Aorta (tissue), 5 donors: ENCODE measurements at regions of chr14 and their contacts with region 1.

Region 1: DNA sequence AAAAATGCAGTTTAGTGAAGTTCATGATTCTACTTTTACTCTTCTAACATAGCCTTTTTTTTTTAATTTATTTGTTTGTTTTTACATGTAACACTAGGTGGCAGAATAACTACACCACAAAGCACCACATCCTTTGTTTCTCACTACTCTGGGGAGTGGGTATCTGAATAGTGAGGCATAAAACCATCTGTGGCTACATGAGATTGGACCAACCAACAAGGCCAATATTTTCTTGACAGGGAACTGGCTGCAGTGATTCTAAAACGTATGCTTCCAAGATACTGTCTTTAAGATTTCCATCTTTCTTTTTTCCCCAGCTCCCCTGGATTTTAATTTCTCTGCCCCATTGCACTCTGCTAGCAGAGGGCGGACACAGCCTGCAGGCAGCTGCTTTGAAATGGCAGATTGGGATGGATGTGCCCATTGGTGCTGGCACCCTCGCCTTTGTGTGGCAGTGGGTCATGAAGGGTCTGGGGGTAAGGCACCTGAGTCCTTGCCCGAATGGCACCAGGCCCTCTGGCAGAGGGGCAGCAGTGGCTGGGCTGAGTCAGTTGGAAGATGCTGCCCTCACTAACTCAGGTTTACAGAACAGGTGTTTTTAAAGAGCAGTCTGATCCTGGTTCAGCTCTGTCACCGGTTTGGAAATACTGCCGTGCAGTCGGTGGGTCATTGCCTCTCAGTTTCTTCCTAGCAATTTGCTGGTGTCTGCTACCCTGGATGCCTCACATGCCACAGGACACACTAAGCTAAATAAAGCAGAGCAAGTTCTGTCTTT is 429.1 kb downstream of the RAD51B start:
- DNase-seq: peak; percentile 57 to 73
- ATAC-seq: peak; percentile 82
- H3K4me3 ChIP-seq: no peak overlapping the region
- H3K27ac ChIP-seq: peak overlapping the region in 1 of 2 donors; percentile 82
- H3K4me1 ChIP-seq: peaks cover 19 to 21% of the 10 kb centered on the region in 2 donors
- H3K27me3 ChIP-seq: no peaks in the 10 kb centered on the region

Region 2: GRCh38 chr14:68369281-68370056 is 120.8 kb after region 1 on chr14:
- intact Hi-C with region 1: loop called in 1 of 2 experiments (anchors 5 kb)
- DNase-seq: no peak
- ATAC-seq: no peak
- H3K4me3 ChIP-seq: no peak overlapping the region
- H3K27ac ChIP-seq: no peak overlapping the region
- H3K4me1 ChIP-seq: peaks cover 0 to 11% of the 10 kb centered on the region in 2 donors
- H3K27me3 ChIP-seq: no peaks in the 10 kb centered on the region

Region 3: GRCh38 chr14:68685419-68686204 is 436.9 kb after region 1 on chr14:
- intact Hi-C with region 1: loop called in 1 of 2 experiments (anchors 10 kb)
- DNase-seq: no peak
- ATAC-seq: no peak
- H3K4me3 ChIP-seq: no peak overlapping the region
- H3K27ac ChIP-seq: no peak overlapping the region
- H3K4me1 ChIP-seq: peaks cover 2 to 11% of the 10 kb centered on the region in 2 donors
- H3K27me3 ChIP-seq: no peaks in the 10 kb centered on the region

Region 4: DNA sequence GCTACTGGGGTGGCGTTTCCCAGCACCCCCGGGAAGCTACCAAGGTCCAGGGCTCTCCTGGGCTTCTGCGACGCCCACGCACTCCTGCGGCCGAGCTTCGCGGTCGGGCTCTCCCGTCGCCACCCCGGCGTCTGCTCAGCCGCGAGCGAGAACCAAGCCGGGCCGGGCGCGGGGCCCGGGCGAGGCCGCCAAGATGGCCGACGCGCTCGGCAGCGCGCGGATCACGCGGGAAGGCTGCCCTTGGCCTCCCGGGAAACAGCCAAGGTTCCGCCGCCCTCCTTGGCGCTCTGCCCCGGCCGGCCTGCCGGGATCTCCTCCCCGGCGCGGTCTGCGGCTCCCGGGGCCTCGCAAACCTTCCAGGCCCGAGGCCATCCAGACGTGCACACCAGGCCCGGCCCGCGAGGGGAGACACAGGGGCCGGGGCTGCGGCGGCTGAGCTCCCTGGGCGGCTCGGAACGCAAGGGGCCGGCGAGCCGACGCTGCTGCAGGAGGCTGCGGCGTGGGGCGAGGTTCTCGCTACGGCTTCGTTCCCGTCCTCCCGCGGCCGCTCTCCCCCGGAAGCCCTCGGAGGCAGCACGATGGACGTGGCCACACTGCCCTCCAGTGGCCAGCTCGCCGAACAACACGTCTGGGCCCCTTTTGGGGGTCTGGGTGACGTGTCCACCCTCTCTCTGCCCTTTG is 567.7 kb after region 1 on chr14:
- intact Hi-C with region 1: loop called (anchors 2 kb)
- DNase-seq: peak; percentile 94 to 97
- ATAC-seq: peak; percentile 94
- H3K4me3 ChIP-seq: no peak overlapping the region
- H3K27ac ChIP-seq: peak overlapping the region; percentile 65 to 70
- H3K4me1 ChIP-seq: peaks cover 0 to 3% of the 10 kb centered on the region in 2 donors
- H3K27me3 ChIP-seq: no peaks in the 10 kb centered on the region